ENCODE measurements at regions of chrX and their contacts with region 1.

Region 1: DNA sequence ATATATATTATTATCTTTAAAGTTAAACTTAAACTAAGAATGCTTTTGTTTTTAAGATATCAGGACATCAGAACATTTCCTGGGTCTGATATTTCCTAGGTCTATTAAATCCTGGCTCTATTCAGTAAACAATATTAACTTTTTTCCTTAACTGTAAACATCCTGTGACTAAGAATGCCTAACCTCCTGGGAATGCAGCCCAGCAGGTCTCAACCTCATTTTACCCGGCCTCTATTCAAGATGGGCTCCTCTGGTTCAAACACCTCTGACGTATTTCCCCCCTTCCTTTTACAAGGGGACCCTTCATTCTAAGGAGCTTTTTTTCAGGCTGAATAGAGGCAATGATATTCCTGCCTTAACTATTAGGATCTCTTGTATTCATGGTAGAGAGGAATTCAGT is 35.8 kb upstream of the DYNLT3 start:
- DNase-seq: peak; percentile 20 to 56
- H3K4me3 ChIP-seq: no peak overlapping the region
- H3K4me3 Mint-ChIP-seq: no peak overlapping the region
- H3K27ac Mint-ChIP-seq: peak overlapping the region; percentile 2
- H3K4me1 ChIP-seq: peaks cover 10% of the 10 kb centered on the region
- H3K4me1 Mint-ChIP-seq: peaks cover 11% of the 10 kb centered on the region
- H3K27me3 ChIP-seq: no peaks in the 10 kb centered on the region
- H3K27me3 Mint-ChIP-seq: no peaks in the 10 kb centered on the region
- CTCF ChIP-seq: no peak

Region 2: DNA sequence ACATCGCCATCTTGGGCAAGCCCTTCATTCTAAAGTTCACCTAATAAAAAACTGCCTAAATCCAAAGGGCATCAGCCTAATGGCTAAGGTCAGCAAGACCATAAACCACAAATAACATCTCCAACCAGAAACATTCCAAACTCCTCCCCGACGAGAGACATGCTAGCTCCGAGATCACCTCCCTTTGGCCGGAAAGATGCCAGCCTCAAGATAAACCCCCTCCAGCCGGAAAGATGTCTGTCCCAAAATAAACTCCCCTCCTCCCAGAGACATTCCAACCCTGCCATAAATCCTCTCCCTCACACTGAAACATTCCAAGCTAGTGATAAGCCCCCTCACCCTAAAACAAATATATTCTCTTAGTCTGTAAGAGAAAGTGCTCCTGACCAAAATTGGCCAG is 22.5 kb before region 1 on chrX:
- CTCF ChIA-PET with region 1: no interaction called
- POLR2A ChIA-PET with region 1: no interaction called
- intact Hi-C with region 1: loop called (anchors 1 kb)
- DNase-seq: peak; percentile 69 to 86
- H3K4me3 ChIP-seq: no peak overlapping the region
- H3K4me3 Mint-ChIP-seq: peak overlapping the region; percentile 44
- H3K27ac Mint-ChIP-seq: peak overlapping the region; percentile 54
- H3K4me1 ChIP-seq: peaks cover 46% of the 10 kb centered on the region
- H3K4me1 Mint-ChIP-seq: peaks cover 22% of the 10 kb centered on the region
- H3K27me3 ChIP-seq: no peaks in the 10 kb centered on the region
- H3K27me3 Mint-ChIP-seq: no peaks in the 10 kb centered on the region
- CTCF ChIP-seq: no peak

Region 3: GRCh38 chrX:38192007-38192810 is 309.0 kb after region 1 on chrX:
- CTCF ChIA-PET with region 1: no interaction called
- POLR2A ChIA-PET with region 1: no interaction called
- intact Hi-C with region 1: no loop called
- DNase-seq: no peak
- H3K4me3 ChIP-seq: no peak overlapping the region
- H3K4me3 Mint-ChIP-seq: no peak overlapping the region
- H3K27ac Mint-ChIP-seq: no peak overlapping the region
- H3K4me1 ChIP-seq: no peaks in the 10 kb centered on the region
- H3K4me1 Mint-ChIP-seq: no peaks in the 10 kb centered on the region
- H3K27me3 ChIP-seq: no peaks in the 10 kb centered on the region
- H3K27me3 Mint-ChIP-seq: no peaks in the 10 kb centered on the region
- CTCF ChIP-seq: peak; percentile 38 to 48

Measured in Caco-2 (cell line).